AG04450 (cell line): ENCODE measurements at regions of chr9 and their contacts with region 1.

Region 1: GRCh38 chr9:115591584-115591984 is 473.6 kb upstream of the TNC start:
- DNase-seq: peak; percentile 99
- H3K4me3 ChIP-seq: no peak overlapping the region
- H3K27ac ChIP-seq: peak overlapping the region; percentile 88
- H3K27me3 ChIP-seq: no peaks in the 10 kb centered on the region
- CTCF ChIP-seq: peak; percentile 94

Region 2: DNA sequence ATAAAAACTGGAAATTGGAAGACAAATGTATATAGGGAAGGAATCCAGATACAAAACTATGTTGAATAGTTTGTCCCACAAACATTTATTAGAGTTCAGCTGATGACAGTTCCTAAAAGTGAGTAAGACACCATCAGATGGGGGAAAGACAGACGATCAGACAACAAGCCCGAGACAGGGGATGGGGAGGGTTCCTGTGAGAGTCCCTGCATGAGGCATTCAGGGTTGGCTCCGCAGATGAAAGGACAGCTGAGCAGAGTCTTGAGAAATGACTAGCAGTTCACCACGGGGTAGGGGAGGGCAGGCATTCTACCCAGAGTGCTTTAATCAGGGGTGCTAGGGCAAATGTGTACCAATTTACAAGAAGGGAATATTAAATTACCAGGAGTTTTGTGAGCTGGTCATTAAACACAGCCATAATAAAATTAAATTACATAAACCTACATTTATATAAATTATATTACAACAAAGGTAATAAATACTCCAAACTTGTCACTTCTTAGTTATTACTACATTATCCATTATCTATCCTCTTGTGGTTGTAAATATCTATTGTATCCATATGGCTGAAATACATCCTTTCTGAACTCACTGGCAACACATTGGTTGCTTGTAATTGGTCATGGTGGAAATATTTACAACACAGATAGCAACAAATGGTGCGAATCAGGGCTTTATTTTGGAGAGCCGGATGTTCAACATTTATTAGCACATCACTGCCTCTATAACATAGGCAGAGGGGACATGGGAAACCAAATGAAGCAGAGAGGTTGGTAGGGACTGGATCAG is 813.6 kb before region 1 on chr9:
- CTCF ChIA-PET with region 1: no interaction called
- POLR2A ChIA-PET with region 1: no interaction called
- DNase-seq: no peak
- H3K4me3 ChIP-seq: no peak overlapping the region
- H3K27ac ChIP-seq: no peak overlapping the region
- H3K27me3 ChIP-seq: peaks cover 33% of the 10 kb centered on the region
- CTCF ChIP-seq: no peak

Region 3: GRCh38 chr9:115117999-115118878 is 473.3 kb before region 1 on chr9 and contains the start of gene TNC:
- CTCF ChIA-PET with region 1: no interaction called
- POLR2A ChIA-PET with region 1: no interaction called
- DNase-seq: peak; percentile 79
- H3K4me3 ChIP-seq: peak within 1 kb of the TSS; percentile 77
- H3K27ac ChIP-seq: peak within 1 kb of the TSS; percentile 92
- H3K27me3 ChIP-seq: no peaks in the 10 kb centered on the region
- CTCF ChIP-seq: no peak
- polyA plus RNA-seq, gene TNC: 265 and 319 TPM in 2 replicates

Region 4: DNA sequence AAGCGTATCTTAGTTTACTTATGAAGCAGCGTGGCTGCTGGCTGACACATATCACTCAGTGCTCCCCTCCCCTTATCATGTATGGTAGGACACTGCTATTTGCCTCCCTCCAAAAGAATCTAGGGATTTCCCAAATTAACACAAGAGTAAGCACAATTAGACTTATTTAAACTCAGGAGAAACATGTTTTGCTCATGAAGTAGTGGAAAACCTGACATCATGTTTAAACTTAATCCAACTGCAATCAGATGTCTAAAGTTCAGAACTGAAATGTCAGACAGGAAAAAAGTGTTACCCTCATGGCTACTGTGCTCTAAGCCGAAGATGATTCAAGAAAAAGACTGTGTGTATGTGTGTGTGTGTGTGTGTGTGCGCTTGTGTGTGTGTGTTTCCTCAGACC is 149.5 kb before region 1 on chr9:
- CTCF ChIA-PET with region 1: no interaction called
- POLR2A ChIA-PET with region 1: no interaction called
- DNase-seq: peak; percentile 55
- H3K4me3 ChIP-seq: no peak overlapping the region
- H3K27ac ChIP-seq: peak overlapping the region; percentile 43
- H3K27me3 ChIP-seq: no peaks in the 10 kb centered on the region
- CTCF ChIP-seq: no peak

Region 5: DNA sequence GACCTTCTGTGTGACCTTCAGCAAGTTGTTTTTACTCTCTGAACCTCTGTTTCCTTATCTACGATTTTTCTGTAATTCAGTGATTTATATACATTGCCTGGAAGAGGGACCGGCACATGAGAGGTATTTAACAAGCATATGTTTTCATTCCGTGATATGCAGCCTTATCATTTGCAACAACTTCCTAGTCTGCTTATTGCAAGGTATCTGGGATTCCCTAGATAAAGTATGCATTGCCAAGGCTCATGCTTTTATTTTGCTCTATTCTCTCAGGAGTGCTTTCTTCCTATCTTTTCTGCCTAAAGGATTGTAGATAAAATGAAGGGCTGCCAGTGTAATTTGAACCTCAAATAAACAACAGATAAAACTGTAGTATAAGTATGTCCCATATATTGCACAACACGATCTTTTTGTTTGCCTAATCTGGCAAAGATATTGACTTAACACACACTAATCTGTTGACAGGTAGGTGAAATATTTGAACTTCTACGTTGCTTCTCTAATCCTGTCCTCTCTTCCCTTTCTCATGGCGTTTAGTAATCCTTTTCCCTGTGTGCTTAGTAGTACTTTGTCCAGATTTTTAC is 96.4 kb before region 1 on chr9:
- CTCF ChIA-PET with region 1: no interaction called
- POLR2A ChIA-PET with region 1: no interaction called
- DNase-seq: no peak
- H3K4me3 ChIP-seq: no peak overlapping the region
- H3K27ac ChIP-seq: no peak overlapping the region
- H3K27me3 ChIP-seq: no peaks in the 10 kb centered on the region
- CTCF ChIP-seq: no peak

Region 6: DNA sequence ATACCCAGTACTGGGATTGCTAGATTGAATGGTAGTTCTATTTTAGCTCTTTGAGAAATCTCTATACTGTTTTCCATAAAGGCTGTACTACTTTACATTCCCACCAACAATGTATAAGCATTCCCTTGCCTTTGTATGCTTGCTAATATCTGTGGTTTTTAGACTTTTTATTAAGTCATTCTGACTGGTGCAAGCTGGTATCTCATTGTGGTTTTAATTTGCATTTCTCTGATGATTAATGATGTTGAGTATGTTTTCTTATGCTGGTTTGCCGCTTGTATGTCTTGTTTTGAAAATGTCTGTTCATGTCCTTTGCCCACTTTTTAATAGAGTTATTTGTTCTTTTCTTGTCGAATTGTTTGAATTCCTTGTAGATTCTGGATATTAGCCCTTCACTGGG is 49.3 kb after region 1 on chr9:
- CTCF ChIA-PET with region 1: interaction called, 14 read pairs
- POLR2A ChIA-PET with region 1: interaction called, 3 read pairs
- DNase-seq: peak; percentile 42
- H3K4me3 ChIP-seq: no peak overlapping the region
- H3K27ac ChIP-seq: no peak overlapping the region
- H3K27me3 ChIP-seq: no peaks in the 10 kb centered on the region
- CTCF ChIP-seq: no peak

Region 7: GRCh38 chr9:115672477-115673316 is 81.1 kb after region 1 on chr9:
- CTCF ChIA-PET with region 1: interaction called, 10 read pairs
- POLR2A ChIA-PET with region 1: interaction called, 11 read pairs
- DNase-seq: peak; percentile 96
- H3K4me3 ChIP-seq: peak overlapping the region; percentile 5
- H3K27ac ChIP-seq: peak overlapping the region; percentile 100
- H3K27me3 ChIP-seq: no peaks in the 10 kb centered on the region
- CTCF ChIP-seq: 0 out of 2 replicates have a peak, but pooled peaks have one; percentile 6

Region 8: GRCh38 chr9:115850548-115851304 is 259.1 kb after region 1 on chr9:
- CTCF ChIA-PET with region 1: interaction called, 12 read pairs
- POLR2A ChIA-PET with region 1: interaction called, 3 read pairs
- DNase-seq: peak; percentile 54
- H3K4me3 ChIP-seq: no peak overlapping the region
- H3K27ac ChIP-seq: no peak overlapping the region
- H3K27me3 ChIP-seq: no peaks in the 10 kb centered on the region
- CTCF ChIP-seq: no peak

Region 9: GRCh38 chr9:116156621-116157314 is 565.2 kb after region 1 on chr9:
- CTCF ChIA-PET with region 1: interaction called, 37 read pairs
- POLR2A ChIA-PET with region 1: interaction called, 12 read pairs
- DNase-seq: no peak
- H3K4me3 ChIP-seq: peak overlapping the region; percentile 89
- H3K27ac ChIP-seq: peak overlapping the region; percentile 84
- H3K27me3 ChIP-seq: no peaks in the 10 kb centered on the region
- CTCF ChIP-seq: no peak

Region 10: DNA sequence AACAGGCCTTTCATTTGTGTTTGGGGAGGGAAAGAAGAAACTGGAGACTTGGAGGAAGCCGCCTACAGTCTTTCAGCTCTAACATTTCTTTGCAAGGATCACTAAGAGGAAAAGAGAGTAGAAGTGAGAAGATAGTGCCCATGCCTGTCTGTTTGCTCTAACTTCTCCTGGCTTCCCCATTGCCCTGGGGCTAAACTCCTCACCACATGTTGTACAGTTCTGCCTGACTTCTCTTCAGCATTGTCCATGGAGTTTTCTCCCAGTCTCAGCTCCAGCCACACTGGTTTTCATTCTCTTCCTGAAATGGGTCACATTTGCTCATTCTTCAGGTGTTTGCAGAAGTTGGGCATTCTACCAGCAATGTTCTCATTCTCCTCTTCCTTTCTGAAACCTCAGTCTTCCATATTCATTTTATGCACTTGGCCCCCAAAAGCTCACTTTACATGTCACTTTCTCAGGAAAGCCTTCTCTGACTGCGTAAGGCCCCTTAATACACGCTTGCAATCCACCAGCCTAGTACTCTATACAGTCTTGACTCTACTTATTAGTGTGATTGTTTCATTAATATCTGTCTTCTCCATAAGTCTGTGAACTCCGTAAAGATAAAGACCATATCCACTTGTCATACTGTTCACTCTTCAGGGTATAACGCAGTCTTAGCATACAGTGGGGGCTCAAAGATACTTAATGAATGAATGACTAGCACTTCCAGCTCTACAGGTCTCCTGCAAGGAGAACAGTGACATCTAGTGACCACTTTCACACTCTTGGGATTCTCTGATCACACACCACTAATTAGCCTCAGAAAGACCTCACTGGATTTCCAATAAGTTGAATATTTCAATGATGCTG is 1055.3 kb after region 1 on chr9:
- CTCF ChIA-PET with region 1: interaction called, 26 read pairs
- POLR2A ChIA-PET with region 1: no interaction called
- DNase-seq: no peak
- H3K4me3 ChIP-seq: no peak overlapping the region
- H3K27ac ChIP-seq: no peak overlapping the region
- H3K27me3 ChIP-seq: no peaks in the 10 kb centered on the region
- CTCF ChIP-seq: peak; percentile 70